Sciatic nerve (tissue), 2 donors: ENCODE measurements at regions of chr5 and their contacts with region 1.

Region 1: GRCh38 chr5:35182541-35183535 is 47.4 kb downstream of the PRLR start:
- DNase-seq: peak; percentile 65
- ATAC-seq: peak; percentile 75

Region 2: DNA sequence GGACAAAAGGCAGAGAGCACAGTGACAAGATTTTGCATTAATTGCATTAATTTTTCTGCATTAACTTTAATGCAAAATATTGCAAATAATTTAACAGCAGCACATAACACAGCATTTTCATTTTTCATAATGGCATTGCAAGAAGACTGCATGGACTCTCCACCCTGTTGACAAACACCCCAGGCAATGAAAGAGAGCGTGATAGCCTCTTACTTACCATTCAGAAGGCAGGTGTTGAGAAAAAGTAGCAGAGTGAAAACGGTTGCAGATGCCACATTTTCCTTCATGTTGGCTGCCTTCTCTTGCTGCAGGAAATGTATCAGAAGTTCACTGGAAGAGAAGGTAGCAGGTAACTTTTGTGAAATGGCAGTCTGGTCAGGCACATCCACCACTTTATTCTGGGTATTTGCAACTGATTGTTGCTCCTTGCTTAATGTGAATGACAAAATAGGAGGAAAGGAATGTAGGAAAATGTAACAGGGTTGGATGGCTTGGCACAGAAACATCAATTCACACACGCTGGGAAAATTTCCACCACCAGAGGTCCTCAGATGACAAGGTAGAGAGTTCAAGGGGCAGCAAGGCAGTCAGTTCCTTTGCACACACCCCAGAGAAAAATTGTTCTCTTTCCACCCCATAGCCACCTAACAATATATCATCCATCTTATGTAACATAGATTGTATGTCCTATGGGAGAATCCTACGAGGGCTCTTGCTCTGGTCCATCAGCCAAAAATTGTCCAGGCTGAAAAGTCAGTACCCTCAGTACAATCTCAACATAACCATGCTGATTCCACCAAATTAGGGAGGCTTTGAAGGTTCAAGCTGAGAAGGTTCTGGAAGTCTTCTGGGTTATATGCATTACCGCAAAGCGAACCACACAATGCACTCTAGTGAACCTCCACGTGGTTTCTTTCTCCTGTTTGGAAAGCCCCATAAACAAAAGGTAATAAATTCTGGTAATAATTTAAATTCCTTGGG is 93.2 kb before region 1 on chr5:
- intact Hi-C with region 1: loop called (anchors 10 kb)
- DNase-seq: peak; percentile 77
- ATAC-seq: peak; percentile 84

Region 3: GRCh38 chr5:36934740-36935356 is 1752.0 kb after region 1 on chr5:
- intact Hi-C with region 1: no loop called
- DNase-seq: no peak
- ATAC-seq: no peak